Kidney (tissue), 22 donors: ENCODE measurements at regions of chr2 and their contacts with region 1.

Region 1: DNA sequence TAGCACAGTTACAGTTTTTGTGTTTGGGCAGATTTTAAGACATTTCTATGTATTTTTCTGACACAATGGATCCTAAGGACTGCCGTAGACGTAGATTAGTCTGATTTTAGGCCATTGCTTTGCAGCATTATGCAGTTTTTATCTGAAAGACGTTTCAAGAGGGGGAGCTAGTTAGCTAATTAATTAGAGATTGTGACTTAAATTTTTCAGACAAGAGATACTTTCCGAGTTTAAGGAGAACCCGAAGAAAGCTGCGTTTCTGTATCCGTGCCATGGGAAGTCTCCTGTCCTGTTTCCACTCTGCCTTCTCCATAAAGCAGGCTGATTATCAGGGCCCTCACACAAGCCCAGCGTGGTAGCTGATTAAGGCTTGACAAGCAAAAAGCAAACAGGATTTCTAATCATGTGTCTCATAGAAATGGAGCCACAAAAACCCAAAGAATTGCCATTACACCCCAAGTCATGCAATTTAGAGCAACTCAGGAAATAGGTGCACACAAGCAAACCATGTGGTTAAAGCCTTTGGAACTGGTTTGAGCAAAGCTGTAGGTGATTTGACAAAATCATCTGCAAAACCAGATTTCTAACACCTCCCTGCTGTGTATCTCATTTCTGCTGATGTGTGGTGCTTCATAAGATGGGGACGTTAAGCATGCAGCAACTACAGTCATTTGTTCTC is 808.1 kb downstream of the RNF144A start:
- DNase-seq: peak in 2 of 5 donors; percentile 49 to 74
- H3K4me3 ChIP-seq: no peak overlapping the region
- H3K27ac ChIP-seq: no peak overlapping the region
- H3K4me1 ChIP-seq: peaks cover 0 to 3% (median 0%) of the 10 kb centered on the region in 3 donors
- H3K27me3 ChIP-seq: no peaks in the 10 kb centered on the region
- CTCF ChIP-seq: no peak

Region 2: DNA sequence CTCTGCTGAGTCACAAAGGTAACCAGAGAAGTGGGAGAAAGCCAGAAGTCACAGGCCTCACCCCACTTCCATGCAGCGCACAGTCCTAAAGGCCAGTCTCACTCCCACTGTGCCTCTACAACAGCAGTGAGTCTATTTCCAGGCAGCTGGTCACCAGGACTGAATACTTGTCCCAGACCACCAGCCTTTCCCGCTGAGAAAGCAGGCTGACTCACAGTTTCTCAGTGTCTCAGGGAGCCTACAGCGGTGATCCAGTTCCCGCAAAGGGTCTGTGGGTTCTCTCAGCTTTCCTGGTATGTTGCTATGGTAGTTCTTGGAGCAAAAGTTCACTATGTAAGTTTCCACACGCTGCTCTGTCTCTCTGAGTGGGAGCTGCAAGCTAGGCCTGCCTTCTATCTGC is 185.6 kb before region 1 on chr2:
- intact Hi-C with region 1: no loop called
- DNase-seq: no peak
- H3K4me3 ChIP-seq: no peak overlapping the region
- H3K27ac ChIP-seq: no peak overlapping the region
- H3K4me1 ChIP-seq: no peaks in the 10 kb centered on the region
- H3K27me3 ChIP-seq: no peaks in the 10 kb centered on the region
- CTCF ChIP-seq: no peak

Region 3: DNA sequence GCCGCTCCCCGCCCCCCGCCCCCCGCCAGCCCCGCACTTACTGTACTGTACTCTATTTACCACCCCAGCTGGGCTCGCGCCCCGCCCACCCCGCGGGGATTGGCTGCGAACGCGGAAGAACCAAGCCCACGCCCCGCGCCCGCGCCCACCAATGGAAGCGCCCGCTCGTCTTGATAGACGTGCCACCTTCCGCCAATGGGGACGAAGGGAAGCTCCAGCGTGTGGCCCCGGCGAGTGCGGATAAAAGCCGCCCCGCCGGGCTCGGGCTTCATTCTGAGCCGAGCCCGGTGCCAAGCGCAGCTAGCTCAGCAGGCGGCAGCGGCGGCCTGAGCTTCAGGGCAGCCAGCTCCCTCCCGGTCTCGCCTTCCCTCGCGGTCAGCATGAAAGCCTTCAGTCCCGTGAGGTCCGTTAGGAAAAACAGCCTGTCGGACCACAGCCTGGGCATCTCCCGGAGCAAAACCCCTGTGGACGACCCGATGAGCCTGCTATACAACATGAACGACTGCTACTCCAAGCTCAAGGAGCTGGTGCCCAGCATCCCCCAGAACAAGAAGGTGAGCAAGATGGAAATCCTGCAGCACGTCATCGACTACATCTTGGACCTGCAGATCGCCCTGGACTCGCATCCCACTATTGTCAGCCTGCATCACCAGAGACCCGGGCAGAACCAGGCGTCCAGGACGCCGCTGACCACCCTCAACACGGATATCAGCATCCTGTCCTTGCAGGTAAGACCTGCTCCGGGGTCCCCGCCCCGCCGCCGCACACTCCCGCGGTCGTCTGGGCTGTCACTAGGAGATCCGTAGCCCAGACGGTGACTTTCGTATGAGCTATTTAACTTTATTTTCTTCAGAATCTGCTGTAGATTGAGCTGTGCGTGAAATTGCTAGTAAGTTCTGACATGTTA is 956.7 kb after region 1 on chr2 and contains the start of gene ID2:
- intact Hi-C with region 1: loop called (anchors 10 kb)
- DNase-seq: peak; percentile 100
- H3K4me3 ChIP-seq: peak within 1 kb of the TSS; percentile 88 to 95 (median 95)
- H3K27ac ChIP-seq: peak within 1 kb of the TSS; percentile 91 to 98
- H3K4me1 ChIP-seq: peaks cover 2 to 7% (median 6%) of the 10 kb centered on the region in 3 donors
- H3K27me3 ChIP-seq: no peaks in the 10 kb centered on the region
- CTCF ChIP-seq: no peak
- total RNA-seq, gene ID2: 74.6 TPM